ENCODE measurements at regions of chr11 and their contacts with region 1.

Region 1: GRCh38 chr11:55707029-55707428 is 45.0 kb downstream of the OR4C6 start:
- DNase-seq: peak; percentile 9
- ATAC-seq: peak; percentile 71
- H3K4me3 ChIP-seq: no peak overlapping the region
- H3K27ac ChIP-seq: no peak overlapping the region
- H3K4me1 ChIP-seq: no peaks in the 10 kb centered on the region
- H3K27me3 ChIP-seq: no peaks in the 10 kb centered on the region
- CTCF ChIP-seq: peak; percentile 40 to 62 (median 47); a peak in 4 of 6 replicates
- EP300 ChIP-seq: no peak
- POLR2A ChIP-seq: no peak
- RAD21 ChIP-seq: peak; percentile 68

Region 2: DNA sequence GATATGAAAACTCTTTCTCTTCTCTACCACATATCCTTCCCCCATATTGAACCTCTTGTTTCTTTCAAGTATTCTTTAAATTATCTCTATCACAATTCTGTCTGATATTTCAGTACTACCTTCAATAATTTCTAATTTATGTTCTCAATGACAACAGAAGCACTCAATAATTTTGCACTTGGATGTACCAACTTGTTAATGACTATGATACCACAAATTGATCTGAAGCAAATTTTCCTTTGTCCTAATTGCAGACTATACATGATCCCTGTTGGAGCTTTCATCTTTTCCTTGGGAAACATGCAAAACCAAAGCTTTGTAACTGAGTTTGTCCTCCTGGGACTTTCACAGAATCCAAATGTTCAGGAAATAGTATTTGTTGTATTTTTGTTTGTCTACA is 152.9 kb before region 1 on chr11 and contains the start of gene OR4C15:
- CTCF ChIA-PET with region 1: no interaction called
- POLR2A ChIA-PET with region 1: no interaction called
- RAD21 ChIA-PET with region 1: no interaction called
- SMC1A ChIA-PET with region 1: no interaction called
- in situ Hi-C with region 1: no loop called
- intact Hi-C with region 1: loop called (anchors 10 kb)
- DNase-seq: no peak
- ATAC-seq: no peak
- H3K4me3 ChIP-seq: no peak within 1 kb of the TSS
- H3K27ac ChIP-seq: no peak within 1 kb of the TSS
- H3K4me1 ChIP-seq: no peaks in the 10 kb centered on the region
- H3K27me3 ChIP-seq: no peaks in the 10 kb centered on the region
- CTCF ChIP-seq: no peak
- EP300 ChIP-seq: no peak
- POLR2A ChIP-seq: no peak
- RAD21 ChIP-seq: no peak
- polyA plus RNA-seq, gene OR4C15: not detected

Region 3: DNA sequence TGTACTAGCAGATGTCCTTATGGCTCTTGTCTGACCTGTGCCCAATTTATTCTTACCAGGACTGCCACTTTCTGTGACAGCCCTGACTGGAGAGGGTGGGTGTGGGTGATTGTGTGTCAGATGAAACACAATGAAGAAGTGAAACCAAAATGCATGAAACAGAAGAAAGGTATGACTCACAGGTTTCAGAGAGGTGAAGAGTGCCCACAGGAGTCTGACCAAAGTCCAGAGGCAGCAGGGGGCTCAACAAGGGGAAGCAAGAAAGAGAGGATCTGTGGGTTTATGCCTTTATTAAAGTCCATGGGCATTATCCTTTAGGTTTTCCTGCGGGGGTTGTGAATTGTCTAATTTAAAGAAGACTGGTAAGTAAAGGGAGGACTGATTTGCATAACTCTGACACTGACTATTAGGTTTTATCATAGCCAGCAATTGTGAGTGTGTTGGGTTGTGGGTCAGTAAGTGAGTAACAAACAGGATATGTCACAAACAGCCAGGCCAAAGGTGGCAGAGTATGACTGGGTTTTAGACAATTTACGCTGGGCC is 48.9 kb before region 1 on chr11:
- CTCF ChIA-PET with region 1: no interaction called
- POLR2A ChIA-PET with region 1: no interaction called
- RAD21 ChIA-PET with region 1: no interaction called
- SMC1A ChIA-PET with region 1: interaction called, 4 read pairs
- in situ Hi-C with region 1: no loop called
- intact Hi-C with region 1: loop called (anchors 5 kb)
- DNase-seq: peak; percentile 59
- ATAC-seq: peak; percentile 93
- H3K4me3 ChIP-seq: no peak overlapping the region
- H3K27ac ChIP-seq: no peak overlapping the region
- H3K4me1 ChIP-seq: no peaks in the 10 kb centered on the region
- H3K27me3 ChIP-seq: no peaks in the 10 kb centered on the region
- CTCF ChIP-seq: no peak
- EP300 ChIP-seq: peak; percentile 85 to 95; a peak in 3 of 4 replicates
- POLR2A ChIP-seq: no peak
- RAD21 ChIP-seq: no peak